B cell (primary cell): ENCODE measurements at regions of chr1 and their contacts with region 1.

Region 1: DNA sequence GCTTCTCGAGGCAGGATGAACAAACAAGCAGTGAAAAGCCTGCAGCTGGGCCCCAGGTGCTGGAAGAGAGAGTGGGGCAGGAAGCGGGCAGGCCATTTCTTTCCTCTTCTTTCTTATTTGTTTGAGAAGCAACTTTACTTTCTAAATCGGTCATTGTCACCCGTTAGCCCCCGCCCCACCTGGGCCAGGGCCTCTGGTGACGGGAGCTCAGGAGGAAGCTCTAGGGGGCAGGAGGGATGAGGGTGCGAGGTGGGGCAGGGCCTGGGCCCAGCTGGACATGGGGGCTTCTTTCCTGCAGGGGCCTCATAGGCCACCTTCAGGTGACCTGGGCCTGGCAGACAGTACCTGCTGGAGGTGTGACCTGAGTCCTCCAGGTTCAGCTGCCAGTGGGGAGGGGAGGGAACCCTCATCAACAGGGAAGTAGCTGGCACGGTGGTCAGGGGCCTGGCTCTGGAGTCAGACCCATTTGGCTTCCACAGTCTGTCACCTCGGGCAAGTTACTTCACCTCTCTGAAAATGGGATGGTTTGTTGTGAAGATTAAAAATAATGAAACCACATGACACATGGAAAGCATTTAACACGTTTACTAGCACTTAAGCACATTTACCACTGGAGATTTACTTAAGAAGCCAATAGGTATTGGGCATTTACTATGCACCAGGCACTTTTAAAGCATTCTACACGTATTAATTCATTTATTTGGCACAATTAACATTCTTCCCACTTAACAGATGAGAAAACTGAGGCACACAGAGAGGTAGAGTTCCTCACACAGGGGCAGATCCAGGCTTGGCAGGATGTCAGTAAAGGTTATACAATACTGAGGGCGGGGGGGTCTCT is 54.1 kb upstream of the ID3 start:
- DNase-seq: peak; percentile 62
- ATAC-seq: peak; percentile 52
- H3K4me3 ChIP-seq: no peak overlapping the region
- H3K4me3 Mint-ChIP-seq: peak overlapping the region; percentile 75
- H3K27ac ChIP-seq: peak overlapping the region; percentile 76 to 88
- H3K27ac Mint-ChIP-seq: peak overlapping the region; percentile 86
- H3K4me1 ChIP-seq: peaks cover 62 to 76% of the 10 kb centered on the region in 2 donors
- H3K4me1 Mint-ChIP-seq: peaks cover 79% of the 10 kb centered on the region
- H3K27me3 ChIP-seq: no peaks in the 10 kb centered on the region
- H3K27me3 Mint-ChIP-seq: no peaks in the 10 kb centered on the region
- CTCF ChIP-seq: no peak

Region 2: GRCh38 chr1:23598424-23598823 is 15.0 kb before region 1 on chr1:
- CTCF ChIA-PET with region 1: interaction called, 51 read pairs
- POLR2A ChIA-PET with region 1: interaction called, 60 read pairs
- intact Hi-C with region 1: loop called (anchors 1 kb)
- DNase-seq: no peak
- ATAC-seq: no peak
- H3K4me3 ChIP-seq: no peak overlapping the region
- H3K4me3 Mint-ChIP-seq: no peak overlapping the region
- H3K27ac ChIP-seq: peak overlapping the region; percentile 32 to 61
- H3K27ac Mint-ChIP-seq: peak overlapping the region; percentile 65
- H3K4me1 ChIP-seq: peaks cover 92 to 96% of the 10 kb centered on the region in 2 donors
- H3K4me1 Mint-ChIP-seq: peaks cover 87% of the 10 kb centered on the region
- H3K27me3 ChIP-seq: no peaks in the 10 kb centered on the region
- H3K27me3 Mint-ChIP-seq: no peaks in the 10 kb centered on the region
- CTCF ChIP-seq: no peak

Region 3: GRCh38 chr1:23904748-23905357 is 291.4 kb after region 1 on chr1:
- CTCF ChIA-PET with region 1: no interaction called
- POLR2A ChIA-PET with region 1: no interaction called
- intact Hi-C with region 1: no loop called
- DNase-seq: no peak
- ATAC-seq: no peak
- H3K4me3 ChIP-seq: no peak overlapping the region
- H3K4me3 Mint-ChIP-seq: peak overlapping the region; percentile 61
- H3K27ac ChIP-seq: peak overlapping the region in 1 of 2 donors; percentile 41
- H3K27ac Mint-ChIP-seq: peak overlapping the region; percentile 76
- H3K4me1 ChIP-seq: peaks cover 87 to 95% of the 10 kb centered on the region in 2 donors
- H3K4me1 Mint-ChIP-seq: peaks cover 85% of the 10 kb centered on the region
- H3K27me3 ChIP-seq: no peaks in the 10 kb centered on the region
- H3K27me3 Mint-ChIP-seq: no peaks in the 10 kb centered on the region
- CTCF ChIP-seq: no peak